A673 (cell line): ENCODE measurements at regions of chr4 and their contacts with region 1.

Region 1: GRCh38 chr4:70583952-70584834 is 7.9 kb upstream of the AMBN start:
- DNase-seq: no peak
- H3K4me3 ChIP-seq: no peak overlapping the region
- H3K27ac ChIP-seq: no peak overlapping the region
- H3K4me1 ChIP-seq: no peaks in the 10 kb centered on the region
- H3K27me3 ChIP-seq: no peaks in the 10 kb centered on the region
- CTCF ChIP-seq: no peak

Region 2: DNA sequence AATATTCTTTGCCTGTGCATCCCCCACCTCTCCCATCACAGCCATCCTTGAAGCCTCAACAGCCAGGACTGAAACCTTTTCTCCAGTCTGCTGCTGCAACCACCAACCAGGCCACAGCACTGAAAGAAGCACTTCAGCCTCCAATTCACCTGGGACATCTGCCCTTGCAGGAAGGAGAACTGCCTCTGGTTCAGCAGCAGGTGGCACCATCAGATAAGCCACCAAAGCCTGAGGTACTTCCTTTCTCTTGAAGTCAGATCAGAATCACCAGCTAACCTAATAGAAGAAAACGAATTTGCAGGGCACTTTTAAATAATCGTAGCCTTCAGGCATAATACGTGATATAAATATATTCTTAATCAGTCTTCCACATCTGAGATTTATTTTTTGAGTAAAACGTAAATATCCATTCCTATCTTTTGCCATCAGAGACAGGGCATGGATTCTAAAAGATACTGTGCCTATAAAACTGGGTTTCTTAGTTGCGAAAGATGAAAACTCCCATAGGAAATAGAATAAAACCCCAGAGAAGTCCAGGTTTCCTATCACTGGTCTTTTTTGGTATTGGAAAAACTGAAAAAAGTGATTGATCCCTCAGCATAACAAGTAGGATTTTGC is 17.3 kb after region 1 on chr4:
- CTCF ChIA-PET with region 1: no interaction called
- POLR2A ChIA-PET with region 1: interaction called, 11 read pairs
- intact Hi-C with region 1: no loop called
- DNase-seq: peak; percentile 68
- H3K4me3 ChIP-seq: no peak overlapping the region
- H3K27ac ChIP-seq: no peak overlapping the region
- H3K4me1 ChIP-seq: no peaks in the 10 kb centered on the region
- H3K27me3 ChIP-seq: no peaks in the 10 kb centered on the region
- CTCF ChIP-seq: peak; percentile 71

Region 3: GRCh38 chr4:70885174-70885573 is 301.0 kb after region 1 on chr4:
- CTCF ChIA-PET with region 1: no interaction called
- POLR2A ChIA-PET with region 1: no interaction called
- intact Hi-C with region 1: no loop called
- DNase-seq: no peak
- H3K4me3 ChIP-seq: no peak overlapping the region
- H3K27ac ChIP-seq: no peak overlapping the region
- H3K4me1 ChIP-seq: no peaks in the 10 kb centered on the region
- H3K27me3 ChIP-seq: no peaks in the 10 kb centered on the region
- CTCF ChIP-seq: no peak